Heart left ventricle (tissue), 16 donors: ENCODE measurements at regions of chr1 and their contacts with region 1.

Region 1: GRCh38 chr1:25810341-25811299 is 9.1 kb upstream of the MTFR1L start:
- DNase-seq: peak; percentile 61 to 87 (median 73)
- ATAC-seq: peak; percentile 27 to 63 (median 46)
- H3K4me3 ChIP-seq: no peak overlapping the region
- H3K27ac ChIP-seq: peak overlapping the region in 1 of 12 donors; percentile 6
- H3K4me1 ChIP-seq: peaks cover 0 to 45% (median 32%) of the 10 kb centered on the region in 12 donors
- H3K27me3 ChIP-seq: no peaks in the 10 kb centered on the region
- CTCF ChIP-seq: peak; percentile 84 to 94 (median 89)
- POLR2A ChIP-seq: no peak

Region 2: GRCh38 chr1:25520446-25521061 is 290.1 kb before region 1 on chr1:
- intact Hi-C with region 1: loop called in 2 of 10 experiments (anchors 5 kb)
- DNase-seq: peak in 3 of 5 donors; percentile 51 to 68 (median 56)
- ATAC-seq: peak in 2 of 4 donors; percentile 36 to 55
- H3K4me3 ChIP-seq: no peak overlapping the region
- H3K27ac ChIP-seq: no peak overlapping the region
- H3K4me1 ChIP-seq: peaks cover 0 to 6% (median 0%) of the 10 kb centered on the region in 12 donors
- H3K27me3 ChIP-seq: no peaks in the 10 kb centered on the region
- CTCF ChIP-seq: peak; percentile 73 to 88 (median 84)
- POLR2A ChIP-seq: no peak

Region 3: GRCh38 chr1:26780344-26780957 is 969.8 kb after region 1 on chr1:
- intact Hi-C with region 1: no loop called
- DNase-seq: no peak
- ATAC-seq: no peak
- H3K4me3 ChIP-seq: no peak overlapping the region
- H3K27ac ChIP-seq: no peak overlapping the region
- H3K4me1 ChIP-seq: peaks cover 12 to 53% (median 40%) of the 10 kb centered on the region in 12 donors
- H3K27me3 ChIP-seq: no peaks in the 10 kb centered on the region
- CTCF ChIP-seq: no peak
- POLR2A ChIP-seq: no peak